AG04449 (cell line): ENCODE measurements at regions of chr16 and their contacts with region 1.

Region 1: GRCh38 chr16:2500918-2501750 is 12.6 kb upstream of the ATP6V0C start:
- DNase-seq: no peak
- H3K4me3 ChIP-seq: peak overlapping the region; percentile 37
- CTCF ChIP-seq: peak; percentile 99

Region 2: DNA sequence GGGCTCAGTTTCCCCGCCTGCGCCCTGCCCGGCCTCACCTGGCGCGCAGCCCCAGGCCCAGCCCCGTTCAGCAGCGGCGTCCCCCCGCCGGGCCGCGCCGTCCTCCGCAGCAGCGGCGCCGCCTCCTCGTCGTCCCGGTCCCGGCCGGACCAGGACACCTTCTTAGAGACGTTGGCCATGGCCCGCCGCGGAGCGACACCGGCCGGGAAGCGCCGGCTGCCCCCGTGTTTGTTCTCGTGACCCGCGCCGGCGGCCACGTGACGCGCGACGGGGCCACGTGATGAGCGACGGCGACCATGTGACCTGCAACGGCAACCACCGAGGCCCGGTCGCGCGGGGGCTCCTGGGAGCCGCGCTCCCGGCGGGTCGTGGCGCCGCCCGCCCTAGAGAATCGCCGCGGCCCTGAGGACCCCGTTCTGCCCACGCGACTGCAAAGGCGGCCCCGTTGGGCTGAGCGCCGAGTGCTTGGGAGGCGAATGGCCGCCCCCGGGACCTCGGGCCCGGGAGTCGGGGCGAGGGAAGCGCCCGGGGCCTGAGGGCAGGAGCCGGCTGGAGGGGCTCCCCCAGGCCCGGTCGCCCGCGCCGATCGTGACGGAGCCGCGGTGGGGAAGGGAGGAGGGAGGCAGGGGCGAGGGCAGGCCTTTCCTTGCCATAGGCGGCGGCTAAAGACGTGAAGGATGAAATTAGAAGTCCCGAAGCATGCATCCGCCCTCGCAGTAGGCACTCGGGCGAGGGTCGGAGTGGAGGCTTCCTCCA is 1026.2 kb before region 1 on chr16 and contains the start of gene CLCN7:
- CTCF ChIA-PET with region 1: no interaction called
- POLR2A ChIA-PET with region 1: no interaction called
- DNase-seq: no peak
- H3K4me3 ChIP-seq: peak within 1 kb of the TSS; percentile 74
- CTCF ChIP-seq: no peak

Region 3: DNA sequence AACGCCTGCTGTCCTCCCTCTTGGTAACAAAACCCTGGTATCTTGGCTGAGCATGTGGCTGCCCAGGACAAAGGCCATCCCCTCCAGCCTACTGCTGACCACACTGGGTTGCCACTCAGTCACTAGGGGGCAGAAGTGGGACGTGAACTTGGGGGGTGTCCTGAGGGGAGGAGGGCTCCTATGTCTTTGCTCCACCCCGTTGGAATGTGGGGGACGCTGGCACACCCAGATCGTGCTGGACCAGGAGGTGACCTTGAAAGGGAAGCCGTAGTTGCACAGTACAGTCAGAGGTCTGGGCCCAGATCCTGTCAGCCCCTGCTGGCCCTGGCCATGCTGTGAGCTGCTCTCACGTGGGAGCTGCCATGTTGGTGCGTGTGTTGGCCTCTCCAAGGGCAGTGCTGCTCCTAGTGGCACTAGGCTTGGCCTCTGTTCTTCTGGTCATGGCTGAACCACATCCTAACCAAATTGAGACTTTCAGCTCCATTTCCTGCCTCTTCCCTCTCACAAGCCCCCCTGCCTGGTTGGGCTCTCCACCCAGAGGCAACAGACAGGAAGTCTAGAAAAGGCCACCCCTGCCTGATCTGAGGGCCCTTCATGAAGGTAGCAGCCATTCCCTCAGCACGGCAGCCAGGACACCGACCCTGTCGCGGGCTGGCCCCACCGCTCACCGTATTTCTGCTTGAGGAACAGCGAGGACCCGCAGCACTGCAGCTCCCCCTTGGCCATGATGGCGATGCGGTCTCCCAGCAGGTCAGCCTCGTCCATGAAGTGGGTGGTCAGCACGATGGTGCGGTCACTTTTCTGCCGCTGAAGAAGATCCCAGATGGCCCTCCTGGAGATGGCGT is 204.3 kb before region 1 on chr16:
- CTCF ChIA-PET with region 1: interaction called, 13 read pairs
- POLR2A ChIA-PET with region 1: no interaction called
- DNase-seq: no peak
- H3K4me3 ChIP-seq: no peak overlapping the region
- CTCF ChIP-seq: peak; percentile 50

Region 4: DNA sequence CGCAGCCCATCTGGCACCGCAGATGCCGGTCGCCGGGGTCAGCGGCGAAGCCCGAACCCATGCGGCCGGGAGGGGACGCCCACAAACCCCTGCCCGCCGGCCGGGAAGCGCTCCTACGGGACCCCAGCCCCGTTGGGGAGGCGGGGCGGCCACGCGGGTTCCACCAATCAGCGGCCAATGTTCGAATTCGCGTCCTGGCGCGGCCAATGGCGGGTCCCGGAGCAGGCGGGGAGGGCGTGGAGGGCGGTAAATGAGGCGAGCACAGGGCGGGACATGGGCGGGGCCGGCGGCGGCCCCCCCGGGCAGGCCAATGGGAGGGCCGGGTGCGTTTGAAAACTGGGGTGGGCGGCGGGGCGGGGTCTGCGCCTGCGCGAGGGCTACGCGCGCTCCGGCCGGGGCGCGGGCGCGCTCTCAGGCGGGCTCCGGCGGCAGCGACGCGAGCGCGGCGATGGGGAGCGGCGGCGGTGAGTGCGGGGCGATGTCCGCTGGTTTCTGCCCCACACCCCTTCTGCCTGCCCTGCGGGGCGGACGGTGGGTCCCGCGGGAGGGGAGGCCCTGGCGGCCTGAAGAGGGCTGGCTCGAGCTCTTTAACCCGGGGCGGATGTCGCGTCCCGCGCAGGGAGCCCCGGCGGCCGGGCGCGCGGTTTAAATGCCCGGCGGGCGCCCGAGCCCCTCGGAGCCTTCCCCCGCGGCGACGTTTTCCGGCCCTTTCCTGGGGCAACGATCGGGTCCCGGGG is 71.9 kb before region 1 on chr16 and contains the start of gene CCNF:
- CTCF ChIA-PET with region 1: interaction called, 14 read pairs
- POLR2A ChIA-PET with region 1: no interaction called
- DNase-seq: peak; percentile 40
- H3K4me3 ChIP-seq: peak within 1 kb of the TSS; percentile 81
- CTCF ChIP-seq: peak; percentile 3

Region 5: DNA sequence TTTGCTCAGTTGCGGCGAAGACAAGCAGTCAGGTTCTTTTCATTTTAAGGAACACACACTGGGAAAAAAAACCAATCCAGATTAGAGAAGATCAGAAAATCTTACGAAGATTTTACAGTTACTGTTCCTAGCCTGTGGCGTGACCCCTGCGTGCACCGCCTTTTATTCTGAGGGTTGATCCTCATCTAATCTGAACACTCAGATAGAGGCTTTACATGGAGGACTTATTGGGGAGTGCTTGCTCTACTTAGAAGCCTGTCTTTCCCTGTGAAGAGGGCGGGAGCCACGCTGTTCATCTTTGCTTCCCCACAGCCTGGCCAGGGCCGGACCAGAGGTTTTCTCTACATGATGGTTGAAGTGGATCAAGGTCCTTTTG is 24.8 kb before region 1 on chr16:
- CTCF ChIA-PET with region 1: interaction called, 10 read pairs
- POLR2A ChIA-PET with region 1: no interaction called
- DNase-seq: no peak
- H3K4me3 ChIP-seq: peak overlapping the region; percentile 78
- CTCF ChIP-seq: no peak

Region 6: DNA sequence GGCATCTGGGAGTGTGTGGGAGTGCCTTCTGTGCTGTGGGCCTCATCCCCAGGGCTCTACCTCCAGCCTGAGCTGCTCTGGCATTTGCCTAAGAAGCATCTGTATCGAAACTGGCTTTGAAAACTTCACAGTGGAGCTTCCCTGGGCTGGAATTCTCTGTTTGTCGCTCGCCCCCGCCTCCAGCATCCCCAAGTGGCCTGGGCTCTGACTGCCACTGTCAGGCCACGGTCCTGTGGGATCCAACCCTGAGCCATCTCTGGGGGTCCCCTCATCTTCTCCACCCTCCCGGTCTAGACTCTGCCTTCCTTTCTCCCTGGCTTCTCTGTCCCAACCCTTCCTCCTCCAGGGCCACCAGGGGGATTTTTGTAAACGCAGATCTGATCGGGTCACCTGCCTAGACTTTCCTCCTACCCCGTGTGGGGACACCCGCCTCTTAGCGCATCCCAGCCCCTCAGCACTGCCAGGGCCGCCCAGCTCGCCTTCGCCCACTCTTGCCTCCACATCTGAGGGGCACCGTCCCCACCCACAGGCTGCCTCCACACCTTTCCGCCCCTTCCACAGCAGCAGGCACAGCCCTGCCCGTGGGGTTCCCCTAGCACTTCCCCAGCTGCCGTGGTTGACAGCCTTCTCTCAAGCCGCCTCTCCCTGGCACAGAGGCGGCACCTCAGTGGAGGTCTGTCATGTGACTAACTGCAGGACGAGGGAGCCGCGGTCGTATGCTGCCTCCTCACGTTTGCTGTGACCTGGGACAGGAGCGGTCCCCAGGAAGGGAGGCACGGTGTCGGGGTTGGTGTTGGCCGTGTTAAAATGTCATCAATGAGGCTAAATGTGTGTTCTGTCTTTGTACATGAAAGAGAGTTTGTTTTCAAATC is 14.3 kb before region 1 on chr16:
- CTCF ChIA-PET with region 1: interaction called, 41 read pairs
- POLR2A ChIA-PET with region 1: no interaction called
- DNase-seq: no peak
- H3K4me3 ChIP-seq: no peak overlapping the region
- CTCF ChIP-seq: peak; percentile 6

Region 7: GRCh38 chr16:2513405-2514322 is 12.5 kb after region 1 on chr16 and contains the start of gene ATP6V0C:
- CTCF ChIA-PET with region 1: interaction called, 33 read pairs
- POLR2A ChIA-PET with region 1: interaction called, 3 read pairs
- DNase-seq: no peak
- H3K4me3 ChIP-seq: peak within 1 kb of the TSS; percentile 83
- CTCF ChIP-seq: no peak

Region 8: GRCh38 chr16:2595393-2596205 is 94.5 kb after region 1 on chr16:
- CTCF ChIA-PET with region 1: no interaction called
- POLR2A ChIA-PET with region 1: no interaction called
- DNase-seq: no peak
- H3K4me3 ChIP-seq: no peak overlapping the region
- CTCF ChIP-seq: no peak